CD8-positive, alpha-beta T cell (primary cell): ENCODE measurements at regions of chr10 and their contacts with region 1.

Region 1: DNA sequence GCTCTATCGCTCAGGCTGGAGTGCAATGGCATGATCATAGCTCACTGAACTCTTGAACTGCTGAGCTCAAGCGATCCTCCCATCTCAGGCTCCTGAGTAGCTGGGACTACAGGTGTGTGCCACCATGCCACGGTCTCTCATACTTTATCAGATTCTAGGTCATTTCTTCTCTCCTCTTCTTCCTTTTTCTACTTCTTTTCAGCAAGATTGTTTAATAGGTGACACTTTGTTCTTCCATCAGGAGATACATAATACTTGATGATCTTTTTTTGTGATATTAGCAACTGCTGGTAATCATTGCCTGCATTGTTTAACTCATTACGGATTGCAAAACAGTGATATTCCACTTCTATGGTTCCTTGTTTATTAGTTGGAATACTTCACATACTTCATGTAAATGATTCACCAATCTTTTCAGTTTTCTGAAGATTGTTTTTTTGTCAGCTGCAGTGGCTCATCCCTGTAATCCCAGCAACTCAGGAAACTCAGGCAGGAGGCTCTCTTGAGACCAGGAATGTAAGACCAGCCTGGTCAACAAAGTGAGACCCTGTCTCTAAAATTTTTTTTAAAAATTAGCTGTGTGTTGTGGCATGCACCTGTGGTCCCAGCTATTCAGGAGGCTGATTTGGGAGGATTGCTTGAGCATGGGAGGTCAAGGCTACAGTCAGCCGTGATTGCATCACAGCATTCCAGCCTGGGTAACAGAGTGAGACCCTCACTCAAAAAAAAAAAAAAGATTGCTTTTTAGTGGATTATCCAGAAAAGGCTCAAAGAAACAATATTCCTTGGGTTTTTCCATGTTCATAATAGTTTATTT is 36.2 kb upstream of the CHST3 start:
- DNase-seq: no peak
- ATAC-seq: no peak
- H3K4me3 ChIP-seq: no peak overlapping the region
- H3K4me3 Mint-ChIP-seq: no peak overlapping the region
- H3K27ac ChIP-seq: no peak overlapping the region
- H3K27ac Mint-ChIP-seq: no peak overlapping the region
- H3K4me1 ChIP-seq: peaks cover 15% of the 10 kb centered on the region
- H3K4me1 Mint-ChIP-seq: peaks cover 7% of the 10 kb centered on the region
- H3K27me3 ChIP-seq: no peaks in the 10 kb centered on the region
- H3K27me3 Mint-ChIP-seq: no peaks in the 10 kb centered on the region
- CTCF ChIP-seq: no peak

Region 2: DNA sequence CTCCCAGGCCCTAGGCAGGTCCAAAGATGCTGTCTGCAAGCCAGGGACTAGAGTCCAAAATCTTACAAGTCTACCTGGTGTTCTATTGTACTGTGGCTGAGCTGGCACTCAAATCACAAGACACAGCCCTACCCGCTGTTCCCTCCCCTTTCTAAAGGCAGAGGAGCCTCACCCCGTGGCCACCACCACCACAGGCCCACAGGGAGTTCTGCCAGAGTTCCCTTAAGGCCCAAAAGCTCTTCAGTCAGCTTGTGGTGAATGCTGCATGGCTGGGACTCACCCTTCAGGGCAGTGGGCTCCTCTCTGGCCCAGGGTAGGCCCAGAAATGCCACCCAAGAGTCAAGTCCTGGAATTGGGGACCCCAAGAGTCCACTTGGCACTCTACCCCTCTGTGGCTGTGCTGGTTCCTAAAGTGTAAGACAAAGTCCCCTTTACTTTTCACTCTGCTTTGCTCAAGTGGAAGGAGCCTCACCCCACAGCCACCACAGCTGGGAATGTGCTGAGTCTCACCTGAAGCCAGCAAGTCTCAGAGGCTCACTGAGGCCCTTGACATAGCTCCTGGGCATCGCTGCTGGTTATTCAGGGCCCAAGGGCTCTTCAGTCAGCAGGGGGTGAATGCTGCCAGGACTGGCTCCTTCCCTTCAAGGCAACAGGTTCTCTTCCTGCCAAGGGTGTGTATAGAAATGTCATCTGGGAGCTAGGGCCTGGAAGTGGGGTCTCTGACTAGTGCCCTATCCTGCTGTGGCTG is 28.1 kb before region 1 on chr10:
- CTCF ChIA-PET with region 1: interaction called, 18 read pairs
- POLR2A ChIA-PET with region 1: no interaction called
- intact Hi-C with region 1: loop called in 1 of 2 experiments (anchors 2 kb)
- DNase-seq: no peak
- ATAC-seq: no peak
- H3K4me3 ChIP-seq: no peak overlapping the region
- H3K4me3 Mint-ChIP-seq: no peak overlapping the region
- H3K27ac ChIP-seq: no peak overlapping the region
- H3K27ac Mint-ChIP-seq: no peak overlapping the region
- H3K4me1 ChIP-seq: no peaks in the 10 kb centered on the region
- H3K4me1 Mint-ChIP-seq: peaks cover 2% of the 10 kb centered on the region
- H3K27me3 ChIP-seq: no peaks in the 10 kb centered on the region
- H3K27me3 Mint-ChIP-seq: no peaks in the 10 kb centered on the region
- CTCF ChIP-seq: no peak